ENCODE measurements at regions of chr1 and their contacts with region 1.

Region 1: GRCh38 chr1:94335950-94336349 is 82.2 kb upstream of the ABCD3 start:
- DNase-seq: peak; percentile 48
- ATAC-seq: peak; percentile 92
- H3K4me3 Mint-ChIP-seq: no peak overlapping the region
- H3K27ac Mint-ChIP-seq: no peak overlapping the region
- H3K4me1 Mint-ChIP-seq: peaks cover 8% of the 10 kb centered on the region
- H3K27me3 Mint-ChIP-seq: peaks cover 2% of the 10 kb centered on the region; the same call in 1 of the 2 replicates
- CTCF ChIP-seq: 0 out of 2 replicates have a peak, but pooled peaks have one; percentile 21

Region 2: DNA sequence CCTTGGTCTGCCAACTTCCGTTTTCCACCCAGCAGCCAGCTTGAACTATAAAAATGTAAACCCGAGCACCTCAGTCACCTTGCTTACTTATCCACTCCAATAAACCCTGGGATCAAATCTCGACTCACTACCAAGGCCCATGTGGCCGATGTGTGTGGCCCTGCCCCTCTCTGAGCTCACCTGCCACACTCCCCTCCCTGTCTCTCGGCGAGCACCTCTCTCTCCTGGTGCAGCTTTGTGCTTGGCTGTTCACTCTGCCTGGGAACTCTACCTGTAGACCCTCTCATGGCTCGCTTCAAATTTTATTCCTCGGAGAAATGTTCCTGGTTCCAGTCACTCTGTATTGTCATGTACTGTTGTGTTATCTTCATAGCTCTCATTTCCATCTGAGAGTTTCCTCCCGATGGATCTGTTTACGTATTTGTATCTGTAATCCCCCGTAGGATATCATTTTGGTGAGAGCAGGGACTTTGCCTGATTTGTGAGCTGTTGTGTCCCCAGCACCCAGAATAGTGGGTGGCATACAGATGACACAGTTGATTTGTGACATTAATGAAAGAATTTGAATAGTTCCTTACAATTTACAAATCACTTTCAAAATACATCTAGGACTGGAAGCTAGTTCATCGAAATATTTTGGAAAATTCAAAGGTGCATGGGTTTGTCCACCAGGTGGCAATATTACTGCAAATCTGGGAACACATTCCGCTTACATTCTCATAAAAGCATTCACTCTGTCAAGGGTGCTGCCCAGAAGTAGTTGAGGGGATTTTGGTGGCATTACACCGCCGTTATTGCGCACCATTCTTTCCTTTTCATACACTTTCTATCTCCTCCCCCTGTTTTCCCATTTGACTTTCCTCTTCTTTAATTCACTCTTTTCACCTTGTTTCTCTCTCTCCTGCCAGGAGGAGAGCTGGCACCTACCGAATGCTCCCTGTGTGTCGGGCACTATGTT is 310.3 kb before region 1 on chr1:
- CTCF ChIA-PET with region 1: interaction called, 57 read pairs
- POLR2A ChIA-PET with region 1: no interaction called
- DNase-seq: no peak
- ATAC-seq: peak; percentile 69
- H3K4me3 Mint-ChIP-seq: no peak overlapping the region
- H3K27ac Mint-ChIP-seq: 0 out of 2 replicates have a peak overlapping the region, but pooled peaks have one; percentile 0
- H3K4me1 Mint-ChIP-seq: peaks cover 36% of the 10 kb centered on the region
- H3K27me3 Mint-ChIP-seq: no peaks in the 10 kb centered on the region; the same call in 1 of the 2 replicates
- CTCF ChIP-seq: peak; percentile 45

Region 3: GRCh38 chr1:94039514-94039870 is 296.5 kb before region 1 on chr1:
- CTCF ChIA-PET with region 1: interaction called, 175 read pairs
- POLR2A ChIA-PET with region 1: no interaction called
- DNase-seq: peak; percentile 86
- ATAC-seq: peak; percentile 90
- H3K4me3 Mint-ChIP-seq: no peak overlapping the region
- H3K27ac Mint-ChIP-seq: no peak overlapping the region
- H3K4me1 Mint-ChIP-seq: peaks cover 20% of the 10 kb centered on the region
- H3K27me3 Mint-ChIP-seq: peaks cover 5% of the 10 kb centered on the region; the same call in 1 of the 2 replicates
- CTCF ChIP-seq: peak; percentile 84

Region 4: GRCh38 chr1:94061513-94062443 is 274.2 kb before region 1 on chr1:
- CTCF ChIA-PET with region 1: interaction called, 190 read pairs
- POLR2A ChIA-PET with region 1: interaction called, 3 read pairs
- DNase-seq: peak; percentile 78
- ATAC-seq: peak; percentile 97
- H3K4me3 Mint-ChIP-seq: no peak overlapping the region
- H3K27ac Mint-ChIP-seq: no peak overlapping the region
- H3K4me1 Mint-ChIP-seq: peaks cover 17% of the 10 kb centered on the region
- H3K27me3 Mint-ChIP-seq: peaks cover 35% of the 10 kb centered on the region
- CTCF ChIP-seq: peak; percentile 85

Region 5: DNA sequence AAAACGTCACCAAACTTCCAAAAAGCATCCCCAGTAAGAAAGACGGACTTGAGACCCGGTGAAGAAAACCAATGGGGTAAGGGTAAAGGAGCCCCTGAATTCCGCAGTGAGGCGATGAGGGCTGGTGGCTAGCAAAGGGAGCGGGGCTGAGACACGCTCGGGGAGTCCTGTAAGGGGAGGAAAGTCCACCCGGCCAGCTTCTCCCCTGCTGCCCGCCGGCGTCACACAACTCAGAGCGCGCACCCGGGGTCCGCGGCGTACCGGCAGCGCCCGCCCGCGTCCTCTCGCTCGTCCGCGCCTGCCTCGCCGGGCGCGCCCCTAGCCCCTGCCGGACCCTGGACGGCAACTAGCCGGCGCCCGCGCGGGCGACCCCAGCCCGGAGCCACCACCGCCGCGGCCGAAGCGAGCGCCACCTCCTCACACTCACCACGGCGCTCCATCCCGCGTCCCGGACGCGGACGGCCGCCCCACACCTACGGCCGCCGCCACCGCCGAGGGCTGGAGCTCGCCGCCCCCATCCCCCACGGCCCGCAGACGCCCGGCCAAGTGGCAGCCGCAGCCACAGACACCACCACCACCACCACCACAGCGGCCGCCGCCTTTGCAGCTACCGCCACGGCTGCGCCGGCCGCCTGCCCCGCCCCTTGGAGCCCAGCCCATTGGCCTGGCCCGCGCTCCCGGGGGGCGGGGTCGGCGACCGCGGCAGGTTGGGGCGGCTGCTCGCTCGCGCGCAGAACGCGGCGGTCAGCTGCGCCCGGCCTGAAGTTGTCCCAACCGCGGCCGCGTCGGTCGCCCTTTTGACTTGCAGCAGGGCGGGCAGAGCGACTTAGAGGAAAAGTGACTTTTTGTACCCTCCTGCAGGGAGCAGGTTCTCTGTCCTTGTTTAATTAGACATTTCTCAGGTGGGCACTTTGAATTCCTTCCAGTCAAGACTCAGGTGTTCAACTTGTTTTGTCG is 88.5 kb before region 1 on chr1:
- CTCF ChIA-PET with region 1: interaction called, 21 read pairs
- POLR2A ChIA-PET with region 1: no interaction called
- DNase-seq: peak; percentile 90
- ATAC-seq: peak; percentile 95
- H3K4me3 Mint-ChIP-seq: peak overlapping the region; percentile 78
- H3K27ac Mint-ChIP-seq: no peak overlapping the region
- H3K4me1 Mint-ChIP-seq: peaks cover 10% of the 10 kb centered on the region
- H3K27me3 Mint-ChIP-seq: peaks cover 92% of the 10 kb centered on the region
- CTCF ChIP-seq: no peak

Region 6: GRCh38 chr1:94299627-94300552 is 36.1 kb before region 1 on chr1:
- CTCF ChIA-PET with region 1: interaction called, 16 read pairs
- POLR2A ChIA-PET with region 1: no interaction called
- DNase-seq: no peak
- ATAC-seq: peak; percentile 62
- H3K4me3 Mint-ChIP-seq: no peak overlapping the region
- H3K27ac Mint-ChIP-seq: no peak overlapping the region
- H3K4me1 Mint-ChIP-seq: peaks cover 8% of the 10 kb centered on the region
- H3K27me3 Mint-ChIP-seq: no peaks in the 10 kb centered on the region
- CTCF ChIP-seq: no peak

Measured in WTC11 (cell line).